ENCODE measurements at regions of chr3 and their contacts with region 1.

Region 1: GRCh38 chr3:193665370-193665989 is 72.5 kb downstream of the OPA1 start:
- DNase-seq: peak in 1 of 2 experiments; percentile 6
- H3K4me3 ChIP-seq: no peak overlapping the region
- H3K4me3 Mint-ChIP-seq: no peak overlapping the region
- H3K27ac Mint-ChIP-seq: no peak overlapping the region
- H3K4me1 ChIP-seq: no peaks in the 10 kb centered on the region
- H3K4me1 Mint-ChIP-seq: no peaks in the 10 kb centered on the region
- H3K27me3 ChIP-seq: no peaks in the 10 kb centered on the region
- H3K27me3 Mint-ChIP-seq: no peaks in the 10 kb centered on the region
- CTCF ChIP-seq: peak in 1 of 2 experiments; percentile 53

Region 2: DNA sequence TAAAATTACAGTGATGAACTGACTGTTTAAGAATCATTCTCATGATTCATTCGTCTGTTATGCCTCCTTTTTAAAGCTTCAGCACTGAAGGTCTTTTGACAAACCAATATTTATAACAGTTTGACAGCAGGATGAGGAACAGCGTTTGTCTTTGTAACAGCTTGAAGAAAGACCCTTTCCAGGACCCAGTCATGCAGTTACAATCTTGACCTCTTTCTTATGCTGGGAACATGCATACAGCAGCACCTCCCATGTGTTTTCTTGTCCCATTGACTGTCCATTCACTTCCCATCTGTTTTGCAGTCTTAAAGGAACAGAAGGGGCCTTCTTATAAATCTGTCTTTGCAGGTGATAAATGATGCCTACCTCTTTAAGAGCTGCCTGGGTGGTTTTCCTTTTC is 14.7 kb after region 1 on chr3:
- CTCF ChIA-PET with region 1: no interaction called
- POLR2A ChIA-PET with region 1: no interaction called
- intact Hi-C with region 1: no loop called
- DNase-seq: no peak
- H3K4me3 ChIP-seq: no peak overlapping the region
- H3K4me3 Mint-ChIP-seq: no peak overlapping the region
- H3K27ac Mint-ChIP-seq: no peak overlapping the region
- H3K4me1 ChIP-seq: no peaks in the 10 kb centered on the region
- H3K4me1 Mint-ChIP-seq: no peaks in the 10 kb centered on the region
- H3K27me3 ChIP-seq: no peaks in the 10 kb centered on the region
- H3K27me3 Mint-ChIP-seq: no peaks in the 10 kb centered on the region
- CTCF ChIP-seq: no peak

Region 3: DNA sequence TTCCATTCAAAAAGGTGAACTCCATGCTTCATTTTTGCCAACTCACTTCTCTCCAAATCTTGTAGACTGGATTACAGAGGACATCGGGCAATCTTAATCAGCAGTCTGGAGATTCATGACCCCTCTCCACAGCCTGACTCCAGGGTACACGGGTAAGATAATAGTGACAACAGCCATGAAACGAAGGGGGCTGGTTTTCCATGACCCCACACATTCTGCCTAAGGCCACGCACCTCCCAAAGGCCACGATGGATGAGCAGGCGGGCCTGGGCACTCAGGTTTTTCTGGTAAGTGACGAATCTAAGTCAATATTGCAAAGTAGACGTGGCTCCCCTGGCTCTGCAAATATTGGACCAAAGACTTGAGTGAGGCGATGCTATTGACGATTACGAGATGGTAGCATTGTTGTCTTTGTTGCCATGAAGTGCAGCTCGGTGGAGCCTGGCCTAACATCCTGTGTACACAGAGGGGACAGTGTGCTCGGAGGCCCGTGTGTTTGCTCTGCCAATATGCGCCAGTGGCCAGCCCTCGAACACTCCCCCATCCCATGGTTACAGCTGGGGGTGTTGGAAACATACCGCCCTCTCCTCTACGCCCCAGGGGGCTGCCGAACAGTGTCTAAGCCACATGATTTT is 46.6 kb after region 1 on chr3:
- CTCF ChIA-PET with region 1: no interaction called
- POLR2A ChIA-PET with region 1: no interaction called
- intact Hi-C with region 1: no loop called
- DNase-seq: no peak
- H3K4me3 ChIP-seq: no peak overlapping the region
- H3K4me3 Mint-ChIP-seq: no peak overlapping the region
- H3K27ac Mint-ChIP-seq: no peak overlapping the region
- H3K4me1 ChIP-seq: no peaks in the 10 kb centered on the region
- H3K4me1 Mint-ChIP-seq: no peaks in the 10 kb centered on the region
- H3K27me3 ChIP-seq: no peaks in the 10 kb centered on the region
- H3K27me3 Mint-ChIP-seq: no peaks in the 10 kb centered on the region
- CTCF ChIP-seq: no peak

Region 4: DNA sequence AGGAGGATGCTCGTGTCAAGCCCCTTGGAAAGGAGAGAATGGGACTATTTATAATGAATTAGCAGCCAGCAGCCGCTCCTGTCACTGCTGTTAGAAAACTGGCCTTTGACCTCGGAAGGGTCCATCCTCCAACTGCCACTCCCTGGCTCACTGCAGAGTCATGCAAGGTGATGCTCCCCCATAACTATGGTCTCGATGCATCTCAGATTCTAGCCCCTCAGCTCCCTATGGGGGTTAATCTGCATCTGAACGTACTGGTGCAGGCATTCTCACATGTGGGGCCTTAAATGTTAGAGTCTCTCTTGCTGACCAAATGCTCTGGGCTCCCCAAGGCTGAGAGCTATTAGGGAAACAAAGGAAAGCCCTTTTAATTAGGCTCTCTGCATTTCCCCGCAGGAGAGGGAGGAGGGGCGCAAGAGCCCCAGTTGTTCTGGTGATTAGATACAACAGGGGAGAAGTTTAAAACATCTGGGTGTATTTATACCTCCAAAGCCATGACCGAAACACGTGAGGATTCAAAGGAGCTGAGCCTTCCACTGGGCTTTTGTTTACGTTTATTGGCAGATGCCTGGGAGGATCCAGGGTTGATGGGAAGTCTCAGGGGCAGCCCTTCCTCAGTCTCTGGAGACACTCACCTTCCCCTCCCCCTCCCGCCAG is 110.1 kb after region 1 on chr3:
- CTCF ChIA-PET with region 1: interaction called, 5 read pairs
- POLR2A ChIA-PET with region 1: no interaction called
- intact Hi-C with region 1: loop called (anchors 2 kb)
- DNase-seq: no peak
- H3K4me3 ChIP-seq: no peak overlapping the region
- H3K4me3 Mint-ChIP-seq: no peak overlapping the region
- H3K27ac Mint-ChIP-seq: no peak overlapping the region
- H3K4me1 ChIP-seq: peaks cover 51% of the 10 kb centered on the region
- H3K4me1 Mint-ChIP-seq: peaks cover 38% of the 10 kb centered on the region
- H3K27me3 ChIP-seq: no peaks in the 10 kb centered on the region
- H3K27me3 Mint-ChIP-seq: no peaks in the 10 kb centered on the region
- CTCF ChIP-seq: no peak

Measured in Caco-2 (cell line).